Right lobe of liver (tissue), 6 donors: ENCODE measurements at regions of chr7 and their contacts with region 1.

Region 1: GRCh38 chr7:100049441-100050311 is at the start of gene ZSCAN21:
- DNase-seq: peak; percentile 85 to 86 (median 86)
- ATAC-seq: peak; percentile 86 to 90 (median 88)
- H3K4me3 ChIP-seq: peak within 1 kb of the TSS; percentile 68 to 75 (median 73)
- H3K27ac ChIP-seq: peak within 1 kb of the TSS; percentile 78 to 93 (median 92)
- H3K4me1 ChIP-seq: peaks cover 0 to 9% (median 0%) of the 10 kb centered on the region in 4 donors
- H3K27me3 ChIP-seq: no peaks in the 10 kb centered on the region
- CTCF ChIP-seq: peak in 3 of 4 donors; percentile 29 to 36 (median 33)
- POLR2A ChIP-seq: peak; percentile 77
- total RNA-seq, gene ZSCAN21: 4.3 to 8.1 (median 5.7) TPM

Region 2: DNA sequence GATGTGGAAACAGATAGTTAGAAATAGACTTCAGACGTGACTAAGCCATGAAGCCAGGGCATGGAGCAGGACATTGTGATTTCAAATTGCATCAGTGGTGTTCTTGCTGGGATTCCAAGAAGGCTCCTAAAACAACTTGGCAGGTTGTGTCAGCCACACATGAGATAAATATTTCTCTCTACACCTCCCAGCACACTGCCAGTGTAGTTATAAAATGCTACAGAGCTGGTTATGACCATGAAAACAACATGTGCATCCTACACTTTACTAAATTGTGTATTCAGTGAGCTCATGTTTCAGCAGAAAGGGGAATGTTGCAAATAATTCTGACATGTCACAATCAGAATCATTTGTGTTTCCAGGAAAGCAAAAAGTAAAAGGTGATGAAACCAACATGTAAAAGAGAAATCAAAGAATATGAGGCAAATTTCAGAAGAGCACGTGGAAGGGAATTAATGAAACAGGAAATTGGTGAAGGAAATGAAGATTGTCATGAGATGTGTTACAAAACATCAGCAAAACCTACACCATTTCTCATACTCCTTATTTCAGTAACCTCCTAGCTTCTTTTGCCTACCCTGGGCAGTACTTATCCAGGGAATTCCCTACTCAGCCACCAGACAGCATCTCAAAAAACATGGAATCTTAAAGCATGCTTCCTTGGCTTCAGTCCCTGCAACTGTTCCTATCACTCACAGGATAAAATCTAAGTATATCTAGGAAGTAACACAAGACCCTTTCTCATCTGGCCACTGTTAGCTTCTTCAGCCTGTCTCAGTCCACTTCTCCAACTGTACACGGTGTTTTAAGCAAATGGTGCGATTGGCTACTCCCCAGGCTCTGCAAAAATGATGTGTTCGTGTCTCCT is 308.9 kb before region 1 on chr7:
- intact Hi-C with region 1: no loop called
- DNase-seq: no peak
- ATAC-seq: peak; percentile 35 to 73 (median 58)
- H3K4me3 ChIP-seq: no peak overlapping the region
- H3K27ac ChIP-seq: peak overlapping the region; percentile 72 to 94 (median 92)
- H3K4me1 ChIP-seq: peaks cover 0 to 40% (median 14%) of the 10 kb centered on the region in 4 donors
- H3K27me3 ChIP-seq: no peaks in the 10 kb centered on the region
- CTCF ChIP-seq: no peak
- POLR2A ChIP-seq: no peak

Region 3: DNA sequence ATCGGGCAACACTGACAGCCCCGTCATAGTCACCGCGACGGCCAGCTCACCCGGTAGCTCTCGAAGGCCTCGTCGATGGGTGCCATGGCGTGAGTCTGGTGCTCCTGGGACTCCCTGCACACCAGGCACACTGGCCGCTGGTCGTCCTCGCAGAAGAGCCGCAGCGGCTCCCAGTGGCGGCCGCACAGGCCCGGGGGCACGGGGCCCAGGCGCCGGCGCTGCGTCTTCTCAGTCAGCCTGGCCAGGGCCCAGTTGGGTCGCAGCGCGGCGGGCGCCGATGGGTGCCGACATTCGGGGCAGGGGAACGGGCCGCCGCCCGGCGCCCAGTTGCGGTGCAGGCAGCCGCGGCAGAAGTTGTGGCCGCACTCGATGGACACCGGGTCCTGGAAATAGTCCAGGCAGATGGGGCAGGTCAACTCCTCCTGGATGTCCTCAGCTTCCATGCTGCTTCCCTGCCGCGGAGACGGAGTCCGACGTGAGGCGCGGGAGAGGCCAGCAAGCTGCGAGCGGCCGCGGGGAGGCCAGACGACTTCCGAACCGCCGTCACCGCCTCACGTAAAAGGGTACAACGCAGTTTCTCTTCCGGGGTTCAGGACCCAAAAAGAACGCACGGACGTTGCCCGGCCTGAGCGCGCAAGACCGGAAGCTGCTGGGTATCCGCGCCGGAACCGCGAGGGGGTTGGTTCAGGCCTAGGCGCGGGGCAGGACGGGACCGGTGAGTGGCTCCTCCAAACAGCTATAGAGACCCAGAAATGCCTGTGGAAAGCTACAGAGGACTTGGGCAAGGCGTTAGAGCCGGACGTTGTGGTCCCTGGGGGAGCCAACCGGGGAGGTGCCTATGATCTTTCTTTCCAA is 130.5 kb before region 1 on chr7 and contains the start of gene TRIM4:
- intact Hi-C with region 1: loop called in 1 of 2 experiments (anchors 10 kb)
- DNase-seq: peak; percentile 92 to 96 (median 95)
- ATAC-seq: peak; percentile 97 to 99 (median 98)
- H3K4me3 ChIP-seq: peak within 1 kb of the TSS; percentile 90 to 97 (median 91)
- H3K27ac ChIP-seq: peak within 1 kb of the TSS; percentile 83 to 92 (median 91)
- H3K4me1 ChIP-seq: peaks cover 0 to 33% (median 13%) of the 10 kb centered on the region in 4 donors
- H3K27me3 ChIP-seq: no peaks in the 10 kb centered on the region
- CTCF ChIP-seq: peak in 2 of 4 donors; percentile 20 to 35
- POLR2A ChIP-seq: peak; percentile 92
- total RNA-seq, gene TRIM4: 13.3 to 22.6 (median 16.3) TPM

Region 4: DNA sequence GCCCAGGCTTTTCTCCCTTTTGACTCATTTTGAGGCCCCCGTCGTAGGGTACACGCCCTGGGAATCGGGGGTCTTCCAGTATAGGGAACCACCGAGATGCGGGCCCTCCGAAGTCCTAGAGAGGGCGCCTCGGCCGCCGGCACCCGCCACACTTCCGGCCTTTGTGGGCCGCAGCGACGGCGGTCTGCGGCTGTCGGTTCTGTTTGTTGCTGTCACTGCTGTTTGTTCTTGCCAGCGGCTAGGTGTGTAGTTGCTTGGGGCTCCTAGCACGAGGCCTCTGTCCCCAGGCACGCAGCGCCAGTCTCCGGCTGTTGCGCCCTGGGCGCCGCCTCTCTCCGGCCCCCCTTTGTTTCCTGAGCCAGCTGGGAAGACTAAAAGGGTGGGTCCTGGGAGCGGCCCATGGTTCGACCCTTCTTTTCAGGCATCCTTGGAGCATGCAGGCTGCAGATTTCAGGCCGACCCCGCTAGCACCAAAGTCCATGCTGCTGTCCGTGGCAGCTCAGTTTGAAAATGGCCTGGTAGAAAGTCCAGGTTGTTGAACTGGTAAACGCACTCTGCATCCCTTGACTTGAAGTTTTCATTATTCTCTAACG is 52.0 kb before region 1 on chr7:
- intact Hi-C with region 1: loop called in 1 of 2 experiments (anchors 10 kb)
- DNase-seq: peak; percentile 60 to 77 (median 69)
- ATAC-seq: peak; percentile 67 to 79 (median 70)
- H3K4me3 ChIP-seq: peak overlapping the region; percentile 24 to 53 (median 43)
- H3K27ac ChIP-seq: peak overlapping the region; percentile 80 to 92 (median 88)
- H3K4me1 ChIP-seq: peaks cover 0 to 51% (median 25%) of the 10 kb centered on the region in 4 donors
- H3K27me3 ChIP-seq: no peaks in the 10 kb centered on the region
- CTCF ChIP-seq: peak; percentile 25 to 33 (median 31)
- POLR2A ChIP-seq: peak; percentile 36